Activated CD8-positive, alpha-beta T cell treated with anti-CD3 and anti-CD28 coated beads, Interleukin-2, amount 10 ng/mL, durations not matched to agents 7 days and 5 days (primary cell): ENCODE measurements at regions of chr20 and their contacts with region 1.

Region 1: GRCh38 chr20:60057123-60057801 is 99.0 kb downstream of the CDH26 start:
- DNase-seq: peak; percentile 83
- ATAC-seq: peak; percentile 62
- H3K4me3 Mint-ChIP-seq: peak overlapping the region; percentile 75
- H3K27ac Mint-ChIP-seq: peak overlapping the region; percentile 89
- H3K4me1 Mint-ChIP-seq: peaks cover 51% of the 10 kb centered on the region
- H3K27me3 Mint-ChIP-seq: peaks cover 5% of the 10 kb centered on the region

Region 2: DNA sequence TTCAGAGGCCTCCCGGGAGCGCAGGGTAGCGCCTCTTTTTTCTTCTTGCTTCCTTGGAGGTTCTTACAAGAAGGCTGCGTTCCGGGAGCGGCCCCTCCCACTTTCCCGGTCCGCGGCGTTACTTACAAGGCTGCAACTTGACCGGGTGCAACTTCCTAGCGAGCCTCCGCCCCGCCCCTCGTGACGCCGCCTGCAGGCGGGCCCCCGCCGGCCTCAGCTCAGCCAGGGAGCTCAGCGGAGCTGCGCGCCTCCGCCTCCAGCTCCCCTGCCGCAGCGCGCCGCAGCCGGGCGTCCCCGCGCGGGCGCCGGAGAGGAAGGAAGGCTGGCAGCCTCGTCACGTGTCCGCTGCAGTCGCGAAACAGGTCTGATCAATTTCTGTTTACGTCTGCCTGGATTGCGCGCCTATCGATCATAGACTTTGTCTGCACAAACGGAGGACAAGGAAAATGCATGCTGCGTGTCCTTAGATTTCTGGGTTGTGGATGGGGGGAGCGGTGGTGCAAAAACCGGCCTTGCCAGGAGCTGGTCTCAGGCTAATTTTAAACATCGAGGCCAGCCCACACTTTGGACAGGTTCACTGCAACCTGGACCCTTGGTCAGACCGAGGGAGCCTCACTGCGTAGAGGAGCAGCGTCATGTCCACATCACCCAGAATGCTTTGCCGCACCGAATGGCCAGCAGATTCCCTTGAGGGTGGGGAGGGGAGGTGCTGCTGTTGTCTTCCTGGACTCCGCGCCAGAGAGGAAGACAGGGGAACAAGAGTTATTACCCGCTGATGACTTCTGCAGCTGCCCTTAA is 116.9 kb before region 1 on chr20 and contains the starts of genes FAM217B and PPP1R3D:
- CTCF ChIA-PET with region 1: interaction called, 21 read pairs
- POLR2A ChIA-PET with region 1: interaction called, 7 read pairs
- DNase-seq: peak; percentile 93
- ATAC-seq: peak; percentile 97
- H3K4me3 Mint-ChIP-seq: peak within 1 kb of the TSS; percentile 92
- H3K27ac Mint-ChIP-seq: peak within 1 kb of the TSS; percentile 97
- H3K4me1 Mint-ChIP-seq: peaks cover 32% of the 10 kb centered on the region
- H3K27me3 Mint-ChIP-seq: no peaks in the 10 kb centered on the region
- total RNA-seq, gene FAM217B: 27.0 to 32.5 TPM
- total RNA-seq, gene PPP1R3D: 6.7 TPM

Region 3: DNA sequence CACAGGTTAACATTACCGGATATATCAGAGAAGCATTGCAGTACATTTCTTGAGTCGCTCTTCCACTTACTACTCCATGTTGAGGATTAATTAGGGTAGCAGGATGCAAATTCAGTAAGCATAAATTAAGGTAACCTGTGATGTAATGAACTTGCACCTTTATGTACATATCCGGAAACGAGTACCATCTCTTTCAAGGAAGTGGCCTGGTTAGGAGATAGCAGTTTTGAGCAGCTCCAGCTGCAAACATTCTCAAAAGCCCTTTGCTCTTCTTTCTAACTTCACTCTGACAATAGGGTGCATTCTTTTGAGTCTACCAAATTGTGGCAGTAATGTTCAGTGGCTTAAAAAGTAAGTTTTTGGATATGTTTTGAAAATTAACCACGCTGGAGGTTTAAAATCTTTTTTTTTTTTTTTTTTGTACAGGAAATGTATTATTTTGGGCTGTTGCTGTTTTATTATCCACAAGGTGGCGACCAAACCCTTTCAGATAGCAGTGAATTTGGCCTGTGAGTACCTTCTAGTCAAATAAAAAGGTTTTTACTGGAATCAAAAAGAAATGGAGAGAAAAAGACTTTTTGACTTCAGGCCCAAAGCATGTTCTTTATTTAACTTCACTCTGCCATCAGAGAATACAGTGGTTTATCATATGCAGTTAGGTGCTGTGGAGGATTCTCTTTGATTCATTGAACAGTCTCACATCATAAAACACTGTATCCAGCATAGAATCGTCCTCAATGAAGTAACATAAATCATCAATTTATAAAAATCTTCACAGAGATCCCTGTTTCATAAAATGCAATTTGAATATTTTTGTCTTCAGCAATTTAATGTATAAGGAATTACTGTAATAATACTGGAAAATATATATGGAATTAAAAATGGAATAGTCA is 108.2 kb before region 1 on chr20:
- CTCF ChIA-PET with region 1: interaction called, 20 read pairs
- POLR2A ChIA-PET with region 1: no interaction called
- DNase-seq: peak; percentile 69
- ATAC-seq: peak; percentile 78
- H3K4me3 Mint-ChIP-seq: peak overlapping the region; percentile 73
- H3K27ac Mint-ChIP-seq: peak overlapping the region; percentile 95
- H3K4me1 Mint-ChIP-seq: peaks cover 23% of the 10 kb centered on the region
- H3K27me3 Mint-ChIP-seq: no peaks in the 10 kb centered on the region

Region 4: GRCh38 chr20:59955132-59955796 is 102.0 kb before region 1 on chr20:
- CTCF ChIA-PET with region 1: interaction called, 20 read pairs
- POLR2A ChIA-PET with region 1: no interaction called
- DNase-seq: no peak
- ATAC-seq: peak; percentile 65
- H3K4me3 Mint-ChIP-seq: no peak overlapping the region
- H3K27ac Mint-ChIP-seq: no peak overlapping the region
- H3K4me1 Mint-ChIP-seq: no peaks in the 10 kb centered on the region
- H3K27me3 Mint-ChIP-seq: no peaks in the 10 kb centered on the region

Region 5: DNA sequence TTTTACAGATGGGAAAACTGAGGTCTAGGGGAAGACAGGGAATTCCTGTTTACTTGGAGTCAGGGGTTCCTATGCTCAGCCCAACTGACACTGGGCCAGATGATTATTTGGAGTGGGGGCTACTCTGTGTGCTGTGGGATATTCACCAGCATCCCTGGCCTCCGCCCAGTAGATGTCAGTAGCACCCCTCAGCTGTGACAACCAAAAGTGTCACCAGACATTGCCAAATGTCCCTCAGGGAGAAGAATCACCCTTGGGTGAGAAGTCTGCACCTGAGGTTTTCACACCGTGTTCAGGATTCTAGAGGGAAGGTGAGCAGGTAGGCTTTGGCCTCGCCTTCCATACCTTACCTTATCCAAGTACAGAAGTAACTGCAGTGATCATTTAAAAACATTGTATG is 71.4 kb before region 1 on chr20:
- CTCF ChIA-PET with region 1: interaction called, 10 read pairs
- POLR2A ChIA-PET with region 1: no interaction called
- DNase-seq: peak; percentile 40
- ATAC-seq: no peak
- H3K4me3 Mint-ChIP-seq: no peak overlapping the region
- H3K27ac Mint-ChIP-seq: no peak overlapping the region
- H3K4me1 Mint-ChIP-seq: peaks cover 3% of the 10 kb centered on the region
- H3K27me3 Mint-ChIP-seq: no peaks in the 10 kb centered on the region

Region 6: GRCh38 chr20:60131375-60131774 is 74.1 kb after region 1 on chr20:
- CTCF ChIA-PET with region 1: no interaction called
- POLR2A ChIA-PET with region 1: no interaction called
- DNase-seq: no peak
- ATAC-seq: no peak
- H3K4me3 Mint-ChIP-seq: no peak overlapping the region
- H3K27ac Mint-ChIP-seq: no peak overlapping the region
- H3K4me1 Mint-ChIP-seq: peaks cover 7% of the 10 kb centered on the region
- H3K27me3 Mint-ChIP-seq: peaks cover 9% of the 10 kb centered on the region

Region 7: GRCh38 chr20:60210779-60211617 is 153.7 kb after region 1 on chr20:
- CTCF ChIA-PET with region 1: interaction called, 19 read pairs
- POLR2A ChIA-PET with region 1: no interaction called
- DNase-seq: peak; percentile 71
- ATAC-seq: peak; percentile 91
- H3K4me3 Mint-ChIP-seq: no peak overlapping the region
- H3K27ac Mint-ChIP-seq: no peak overlapping the region
- H3K4me1 Mint-ChIP-seq: peaks cover 3% of the 10 kb centered on the region
- H3K27me3 Mint-ChIP-seq: no peaks in the 10 kb centered on the region

Region 8: GRCh38 chr20:60262967-60263603 is 205.8 kb after region 1 on chr20:
- CTCF ChIA-PET with region 1: interaction called, 47 read pairs
- POLR2A ChIA-PET with region 1: no interaction called
- DNase-seq: peak; percentile 61
- ATAC-seq: peak; percentile 51
- H3K4me3 Mint-ChIP-seq: no peak overlapping the region
- H3K27ac Mint-ChIP-seq: no peak overlapping the region
- H3K4me1 Mint-ChIP-seq: peaks cover 12% of the 10 kb centered on the region
- H3K27me3 Mint-ChIP-seq: peaks cover 5% of the 10 kb centered on the region